Activated CD4-positive, alpha-beta T cell treated with anti-CD3 and anti-CD28 coated beads for 36 hours (primary cell): ENCODE measurements at regions of chr13 and their contacts with region 1.

Region 1: DNA sequence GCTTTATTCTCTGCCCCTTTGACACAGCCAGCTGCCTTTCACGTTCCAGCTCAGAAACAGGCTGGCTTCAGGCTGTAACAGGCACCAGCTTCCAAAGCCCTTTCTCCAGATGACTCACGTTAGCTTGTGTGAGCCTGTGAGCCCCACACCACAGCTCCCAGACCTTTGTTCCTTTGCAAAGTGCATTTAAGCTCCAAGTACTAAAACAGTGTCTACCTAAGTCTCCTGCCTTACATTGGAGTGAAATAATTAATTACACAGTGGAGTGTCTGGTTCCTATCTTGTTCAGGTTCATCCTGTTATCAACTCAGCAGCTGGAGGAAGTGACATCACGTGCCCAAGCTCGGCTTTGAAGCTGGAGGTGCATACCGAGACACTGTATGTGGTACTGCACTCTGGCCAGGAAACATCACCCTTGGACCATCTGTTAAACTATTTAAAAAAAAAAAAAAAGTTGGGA is 475.8 kb downstream of the FOXO1 start:
- DNase-seq: peak; percentile 81
- ATAC-seq: peak; percentile 43
- H3K4me3 Mint-ChIP-seq: peak overlapping the region; percentile 32
- H3K27ac Mint-ChIP-seq: peak overlapping the region; percentile 89
- H3K4me1 Mint-ChIP-seq: peaks cover 76% of the 10 kb centered on the region
- H3K27me3 Mint-ChIP-seq: no peaks in the 10 kb centered on the region

Region 2: GRCh38 chr13:40206241-40207000 is 15.8 kb after region 1 on chr13:
- CTCF ChIA-PET with region 1: interaction called, 21 read pairs
- POLR2A ChIA-PET with region 1: interaction called, 3 read pairs
- intact Hi-C with region 1: loop called (anchors 1 to 2 kb)
- DNase-seq: peak; percentile 68
- ATAC-seq: peak; percentile 89
- H3K4me3 Mint-ChIP-seq: peak overlapping the region; percentile 58
- H3K27ac Mint-ChIP-seq: peak overlapping the region; percentile 99
- H3K4me1 Mint-ChIP-seq: peaks cover 64% of the 10 kb centered on the region
- H3K27me3 Mint-ChIP-seq: no peaks in the 10 kb centered on the region

Region 3: DNA sequence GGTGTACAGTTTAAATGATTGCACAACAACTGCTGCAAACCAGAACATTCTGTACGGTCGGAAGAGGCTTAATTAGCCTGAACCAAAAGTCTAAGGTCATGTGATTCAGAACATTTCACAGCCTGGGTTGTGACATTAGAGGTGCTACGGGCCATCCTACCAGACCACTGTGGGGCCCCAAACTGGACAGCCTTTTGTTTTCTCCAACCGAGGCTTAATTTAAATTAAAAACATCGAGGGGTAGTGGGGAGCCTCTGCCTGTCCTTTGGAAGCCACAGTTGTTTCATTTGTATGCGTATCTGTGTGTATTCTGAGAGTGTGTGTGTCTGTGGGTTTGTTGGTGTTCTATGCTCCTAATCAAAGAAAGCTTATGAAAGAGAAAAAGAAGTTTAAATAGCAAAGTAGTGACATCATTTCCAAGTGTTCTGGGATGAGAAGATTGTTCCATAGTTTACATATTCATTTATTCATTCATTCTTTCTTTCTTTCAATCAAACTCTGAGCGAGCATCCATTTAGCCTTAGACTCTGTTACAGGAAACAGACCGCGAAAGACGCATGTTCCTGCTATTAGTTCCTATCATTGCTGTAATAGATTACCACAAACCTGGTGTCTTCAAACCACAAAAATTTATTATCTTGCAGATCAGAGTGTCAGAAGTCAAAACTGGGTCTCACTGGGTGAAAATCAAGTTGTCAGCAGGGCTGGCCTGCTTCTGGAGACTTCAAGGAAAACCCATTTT is 31.0 kb after region 1 on chr13:
- CTCF ChIA-PET with region 1: no interaction called
- POLR2A ChIA-PET with region 1: no interaction called
- intact Hi-C with region 1: loop called in 1 of 2 experiments (anchors 5 kb)
- DNase-seq: peak; percentile 62
- ATAC-seq: peak; percentile 63
- H3K4me3 Mint-ChIP-seq: peak overlapping the region; percentile 45
- H3K27ac Mint-ChIP-seq: peak overlapping the region; percentile 91
- H3K4me1 Mint-ChIP-seq: peaks cover 61% of the 10 kb centered on the region
- H3K27me3 Mint-ChIP-seq: no peaks in the 10 kb centered on the region

Region 4: GRCh38 chr13:40275636-40276035 is 85.0 kb after region 1 on chr13:
- CTCF ChIA-PET with region 1: no interaction called
- POLR2A ChIA-PET with region 1: no interaction called
- intact Hi-C with region 1: no loop called
- DNase-seq: no peak
- ATAC-seq: no peak
- H3K4me3 Mint-ChIP-seq: no peak overlapping the region
- H3K27ac Mint-ChIP-seq: no peak overlapping the region
- H3K4me1 Mint-ChIP-seq: peaks cover 26% of the 10 kb centered on the region
- H3K27me3 Mint-ChIP-seq: no peaks in the 10 kb centered on the region

Region 5: DNA sequence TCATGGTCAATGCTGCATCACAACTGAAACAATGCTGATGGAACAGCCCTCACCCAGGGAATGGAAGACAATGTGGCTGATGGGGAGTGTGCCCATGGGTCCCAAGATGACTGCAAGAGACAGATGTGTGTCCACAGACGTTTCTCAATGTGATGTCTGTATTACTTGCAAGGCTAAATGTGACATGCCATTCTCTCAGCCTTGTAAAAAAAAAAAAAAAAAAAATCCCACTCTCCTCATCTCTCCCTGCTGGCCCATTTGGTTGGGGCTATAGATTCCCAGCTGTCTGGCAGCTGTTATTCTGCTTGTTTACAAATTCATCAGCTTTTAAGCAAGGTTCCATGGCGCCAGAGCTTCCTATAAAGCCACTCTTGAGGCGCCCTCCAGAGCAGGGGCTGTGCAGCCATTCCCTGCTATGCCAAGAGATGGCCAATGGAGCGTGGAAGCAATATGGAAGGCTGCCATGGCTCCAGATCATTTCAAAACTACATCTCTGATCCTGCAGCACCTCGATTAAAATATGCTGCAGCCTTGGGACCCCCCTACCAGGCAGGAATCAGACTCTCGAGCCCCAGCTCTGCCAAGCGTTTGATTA is 181.0 kb after region 1 on chr13:
- CTCF ChIA-PET with region 1: no interaction called
- POLR2A ChIA-PET with region 1: no interaction called
- intact Hi-C with region 1: loop called in 1 of 2 experiments (anchors 5 kb)
- DNase-seq: no peak
- ATAC-seq: no peak
- H3K4me3 Mint-ChIP-seq: no peak overlapping the region
- H3K27ac Mint-ChIP-seq: peak overlapping the region; percentile 61
- H3K4me1 Mint-ChIP-seq: peaks cover 42% of the 10 kb centered on the region
- H3K27me3 Mint-ChIP-seq: no peaks in the 10 kb centered on the region